GM10248 (cell line): ENCODE measurements at regions of chr2 and their contacts with region 1.

Region 1: DNA sequence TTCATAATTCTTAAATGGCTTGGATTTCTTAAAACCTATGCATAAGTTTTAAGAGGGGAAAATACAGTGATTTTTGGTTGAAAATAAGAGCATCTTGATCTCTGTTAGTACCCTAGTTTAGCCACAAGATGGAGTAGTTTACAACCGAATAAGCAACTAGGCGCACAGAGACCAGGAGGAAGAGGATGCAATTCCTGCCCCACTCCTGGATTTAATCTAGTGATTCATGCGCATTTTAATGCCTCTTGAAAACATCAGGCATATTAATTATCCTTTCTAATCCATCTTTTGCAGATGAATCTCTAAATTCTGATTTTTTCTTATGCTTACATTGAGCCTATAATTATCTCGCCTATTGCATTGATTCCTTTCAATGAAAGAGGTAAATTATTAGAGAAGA is 76.7 kb downstream of the MRPS9 start:
- DNase-seq: peak; percentile 63
- CTCF ChIP-seq: peak; percentile 54

Region 2: DNA sequence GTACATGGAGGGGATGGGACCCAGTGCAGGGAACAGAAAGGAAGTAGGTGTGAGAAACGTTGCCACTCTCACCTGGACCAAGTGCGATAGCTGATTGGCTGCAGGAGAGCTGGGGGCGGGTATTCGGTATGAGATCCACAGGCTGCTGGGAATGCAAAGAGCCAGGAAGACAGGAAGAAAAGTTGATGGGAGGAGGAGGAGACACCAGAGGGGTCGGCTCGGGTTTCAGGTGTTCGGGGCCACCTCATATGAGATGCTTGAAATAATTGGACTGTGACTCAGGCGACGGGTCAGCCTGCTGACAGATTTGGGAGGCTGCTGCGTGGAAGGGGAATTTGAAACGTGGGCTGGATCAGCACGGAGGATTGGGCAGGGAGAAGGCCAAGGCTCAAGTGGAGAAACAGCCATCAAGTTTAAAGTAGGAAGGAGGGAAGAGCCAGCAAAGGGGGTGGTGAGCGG is 11.6 kb before region 1 on chr2:
- CTCF ChIA-PET with region 1: interaction called, 44 read pairs
- POLR2A ChIA-PET with region 1: no interaction called
- DNase-seq: no peak
- CTCF ChIP-seq: no peak

Region 3: DNA sequence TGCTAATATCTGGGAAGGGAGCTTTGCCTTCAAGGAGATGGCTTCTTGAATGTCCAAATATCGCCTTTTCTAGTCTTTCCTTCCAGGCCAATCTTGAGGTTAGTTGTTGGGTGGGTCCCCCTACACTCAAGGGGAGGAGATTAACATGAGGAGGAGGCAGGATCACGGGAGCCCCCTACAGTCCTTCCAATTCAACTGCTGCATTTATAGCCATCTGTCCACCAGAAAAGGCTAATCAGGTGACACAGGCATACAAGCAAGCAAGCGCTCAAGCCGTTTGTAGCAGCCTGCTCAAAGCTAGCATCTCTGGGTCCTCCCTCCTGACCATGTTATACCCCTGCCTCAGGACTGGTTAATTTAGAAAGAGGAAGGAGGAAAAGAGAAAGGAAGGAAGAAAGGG is 10.9 kb after region 1 on chr2:
- CTCF ChIA-PET with region 1: interaction called, 25 read pairs
- POLR2A ChIA-PET with region 1: no interaction called
- DNase-seq: no peak
- CTCF ChIP-seq: no peak

Region 4: GRCh38 chr2:105134081-105134480 is 19.5 kb after region 1 on chr2:
- CTCF ChIA-PET with region 1: interaction called, 10 read pairs
- POLR2A ChIA-PET with region 1: no interaction called
- DNase-seq: no peak
- CTCF ChIP-seq: no peak

Region 5: DNA sequence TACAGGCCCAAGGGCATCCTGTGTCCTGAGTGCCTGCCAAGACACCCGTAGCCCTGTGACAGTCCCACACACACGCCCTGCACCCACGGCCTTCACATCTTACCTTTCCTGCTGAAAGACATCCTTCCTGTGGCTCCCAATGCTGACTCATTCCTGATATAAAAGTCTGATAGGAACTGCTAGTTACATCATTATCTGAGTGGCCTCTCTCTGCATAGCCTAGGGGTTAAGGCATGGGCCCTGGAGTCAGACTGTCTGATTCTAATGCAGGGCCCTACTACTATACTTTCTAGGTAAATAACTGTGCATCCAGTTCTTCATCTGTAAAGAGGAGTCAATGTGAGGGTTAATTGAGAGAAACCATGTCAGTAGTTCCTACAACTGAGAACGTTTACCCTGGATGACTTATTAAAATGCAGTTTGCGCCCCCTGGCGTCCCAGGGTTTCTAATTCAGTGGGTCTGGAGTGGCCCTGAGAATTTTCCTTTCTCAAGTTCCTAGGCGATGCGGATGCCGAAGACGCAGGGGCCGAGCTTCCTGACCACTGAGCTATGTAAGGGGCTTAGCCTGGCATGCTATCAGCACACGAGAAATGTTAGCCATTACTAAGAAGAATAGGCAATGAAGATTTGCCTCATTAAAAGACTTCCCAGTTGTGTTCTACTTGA is 121.0 kb after region 1 on chr2:
- CTCF ChIA-PET with region 1: interaction called, 492 read pairs
- POLR2A ChIA-PET with region 1: no interaction called
- DNase-seq: peak; percentile 55
- CTCF ChIP-seq: peak; percentile 73

Region 6: GRCh38 chr2:105294844-105295481 is 180.4 kb after region 1 on chr2:
- CTCF ChIA-PET with region 1: interaction called, 23 read pairs
- POLR2A ChIA-PET with region 1: no interaction called
- DNase-seq: peak; percentile 50
- CTCF ChIP-seq: peak; percentile 61